Upper lobe of right lung (tissue), 1 donor: ENCODE measurements at regions of chr9 and their contacts with region 1.

Region 1: DNA sequence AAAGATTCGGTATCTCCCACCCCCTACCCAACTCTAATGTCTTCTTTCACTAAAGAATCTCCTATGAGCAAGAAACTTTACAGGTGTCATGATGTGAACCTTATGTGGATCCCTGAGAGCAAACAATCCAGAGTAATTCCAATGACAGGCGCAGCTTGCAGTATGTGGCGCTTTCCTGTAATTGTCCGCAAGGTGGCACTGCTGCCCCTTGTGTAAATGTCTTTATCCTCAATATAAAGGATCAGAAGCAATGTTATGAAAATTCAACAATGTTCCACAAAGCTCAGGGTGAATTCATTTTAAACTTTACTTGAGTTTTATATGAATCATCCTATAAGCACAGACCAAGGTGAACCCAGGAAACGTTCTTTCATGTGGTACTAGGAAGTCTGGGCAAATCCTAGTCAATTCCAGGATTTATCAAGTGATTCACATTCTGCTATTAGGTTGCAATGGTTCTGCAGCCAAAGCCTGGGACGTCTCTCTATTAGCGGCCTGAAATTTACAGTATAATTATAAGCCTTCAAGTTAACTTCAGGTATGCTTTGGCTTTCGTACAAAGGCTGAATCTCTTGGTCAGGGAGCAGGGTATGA is 113.7 kb downstream of the TRPM6 start:
- DNase-seq: peak; percentile 73
- ATAC-seq: peak; percentile 91
- H3K4me3 ChIP-seq: no peak overlapping the region
- H3K27ac ChIP-seq: no peak overlapping the region
- H3K4me1 ChIP-seq: no peaks in the 10 kb centered on the region
- H3K27me3 ChIP-seq: no peaks in the 10 kb centered on the region
- CTCF ChIP-seq: peak; percentile 92

Region 2: GRCh38 chr9:74848153-74848525 is 74.2 kb after region 1 on chr9:
- intact Hi-C with region 1: no loop called
- DNase-seq: no peak
- ATAC-seq: no peak
- H3K4me3 ChIP-seq: no peak overlapping the region
- H3K27ac ChIP-seq: no peak overlapping the region
- H3K4me1 ChIP-seq: no peaks in the 10 kb centered on the region
- H3K27me3 ChIP-seq: no peaks in the 10 kb centered on the region
- CTCF ChIP-seq: no peak

Region 3: GRCh38 chr9:75001719-75002422 is 227.9 kb after region 1 on chr9:
- intact Hi-C with region 1: loop called (anchors 5 kb)
- DNase-seq: no peak
- ATAC-seq: peak; percentile 91
- H3K4me3 ChIP-seq: no peak overlapping the region
- H3K27ac ChIP-seq: no peak overlapping the region
- H3K4me1 ChIP-seq: no peaks in the 10 kb centered on the region
- H3K27me3 ChIP-seq: no peaks in the 10 kb centered on the region
- CTCF ChIP-seq: peak; percentile 81

Region 4: GRCh38 chr9:75071530-75072124 is 297.6 kb after region 1 on chr9:
- intact Hi-C with region 1: loop called (anchors 10 kb)
- DNase-seq: peak; percentile 82
- ATAC-seq: peak; percentile 99
- H3K4me3 ChIP-seq: no peak overlapping the region
- H3K27ac ChIP-seq: peak overlapping the region; percentile 32
- H3K4me1 ChIP-seq: no peaks in the 10 kb centered on the region
- H3K27me3 ChIP-seq: no peaks in the 10 kb centered on the region
- CTCF ChIP-seq: no peak